Activated CD8-positive, alpha-beta T cell treated with anti-CD3 and anti-CD28 coated beads, Interleukin-2, amount 10 ng/mL, durations not matched to agents 7 days and 5 days (primary cell): ENCODE measurements at regions of chrX and their contacts with region 1.

Region 1: GRCh38 chrX:73855546-73855945 is 292.5 kb downstream of the CHIC1 start:
- DNase-seq: peak; percentile 66
- ATAC-seq: no peak
- H3K4me3 Mint-ChIP-seq: no peak overlapping the region
- H3K27ac Mint-ChIP-seq: no peak overlapping the region
- H3K4me1 Mint-ChIP-seq: no peaks in the 10 kb centered on the region
- H3K27me3 Mint-ChIP-seq: no peaks in the 10 kb centered on the region

Region 2: GRCh38 chrX:73841337-73841736 is 14.2 kb before region 1 on chrX:
- CTCF ChIA-PET with region 1: no interaction called
- POLR2A ChIA-PET with region 1: no interaction called
- DNase-seq: no peak
- ATAC-seq: no peak
- H3K4me3 Mint-ChIP-seq: no peak overlapping the region
- H3K27ac Mint-ChIP-seq: no peak overlapping the region
- H3K4me1 Mint-ChIP-seq: no peaks in the 10 kb centered on the region
- H3K27me3 Mint-ChIP-seq: no peaks in the 10 kb centered on the region

Region 3: DNA sequence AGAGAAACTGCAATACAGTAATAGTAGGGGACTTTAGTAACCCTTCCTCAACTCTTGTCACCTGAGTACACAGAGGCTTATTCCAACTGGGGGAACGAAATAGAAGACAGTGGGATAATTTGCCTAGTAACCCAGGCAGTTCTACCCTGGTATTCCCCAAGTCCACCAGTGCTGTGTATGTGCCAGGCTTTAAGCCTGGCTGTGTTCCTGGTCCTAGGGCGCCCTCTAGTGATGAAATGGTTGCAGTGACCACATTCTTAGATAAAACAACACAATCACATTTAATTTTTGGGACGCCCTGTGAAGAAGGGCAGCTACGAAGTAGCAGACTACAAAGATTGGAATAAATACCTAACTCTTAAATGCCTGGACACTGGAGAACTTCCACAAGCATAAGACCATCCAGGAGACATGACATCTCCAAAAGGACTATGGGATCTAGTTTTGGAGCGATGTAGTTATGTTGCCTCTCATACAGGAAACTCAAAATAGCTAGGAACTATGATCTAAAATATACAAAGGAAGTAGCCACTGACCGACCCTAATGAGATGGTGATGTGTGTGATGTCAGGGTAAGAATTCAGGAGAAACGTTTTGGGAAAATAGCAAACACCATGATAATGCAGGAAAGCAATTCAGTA is 160.0 kb after region 1 on chrX:
- CTCF ChIA-PET with region 1: interaction called, 17 read pairs
- POLR2A ChIA-PET with region 1: no interaction called
- DNase-seq: peak; percentile 63
- ATAC-seq: peak; percentile 79
- H3K4me3 Mint-ChIP-seq: no peak overlapping the region
- H3K27ac Mint-ChIP-seq: no peak overlapping the region
- H3K4me1 Mint-ChIP-seq: peaks cover 2% of the 10 kb centered on the region
- H3K27me3 Mint-ChIP-seq: peaks cover 1% of the 10 kb centered on the region